ENCODE measurements at regions of chr3 and their contacts with region 1.

Region 1: DNA sequence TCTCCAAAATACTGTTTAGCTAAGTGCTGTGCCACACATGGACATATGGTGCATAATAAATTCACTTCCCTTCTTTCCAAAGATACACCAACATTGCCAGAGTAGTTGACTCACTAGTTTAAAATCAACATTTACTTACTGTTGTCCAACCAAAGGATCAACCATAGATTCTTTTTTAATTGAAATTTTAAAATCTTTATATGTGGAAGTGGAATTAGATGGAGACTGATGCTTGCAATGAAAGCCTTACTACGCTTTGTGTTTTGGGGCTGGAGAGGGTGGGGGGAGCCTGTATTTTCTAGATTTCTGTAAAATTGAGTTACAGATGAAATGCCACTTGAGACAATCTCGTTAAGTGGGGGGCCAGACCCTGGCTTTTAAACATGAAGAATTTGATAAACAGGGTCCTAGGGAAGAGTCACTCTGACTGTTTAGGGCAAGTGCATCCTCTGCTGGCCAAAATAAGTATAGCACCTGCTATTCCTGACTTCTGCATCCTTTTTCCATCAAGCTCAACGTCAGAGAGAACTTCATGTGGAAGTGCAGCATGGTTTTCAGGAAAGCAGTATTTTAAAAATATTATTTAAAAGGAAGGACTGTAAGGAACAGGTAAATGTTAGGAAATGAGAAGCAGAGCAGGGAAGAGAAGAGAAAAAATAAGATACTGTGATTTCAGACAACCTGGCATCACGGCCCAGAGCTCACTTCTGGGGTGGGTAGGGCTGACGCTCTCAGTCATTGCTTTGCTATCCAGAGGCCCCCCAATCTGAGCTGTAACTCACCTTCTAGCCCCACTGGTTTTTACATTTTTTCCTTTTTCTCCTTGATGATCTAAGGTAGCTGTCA is 76.7 kb downstream of the BOC start:
- DNase-seq: peak; percentile 69
- CTCF ChIP-seq: peak; percentile 95

Region 2: GRCh38 chr3:112832735-112833134 is 455.3 kb before region 1 on chr3:
- in situ Hi-C with region 1: no loop called
- DNase-seq: no peak
- CTCF ChIP-seq: no peak

Region 3: DNA sequence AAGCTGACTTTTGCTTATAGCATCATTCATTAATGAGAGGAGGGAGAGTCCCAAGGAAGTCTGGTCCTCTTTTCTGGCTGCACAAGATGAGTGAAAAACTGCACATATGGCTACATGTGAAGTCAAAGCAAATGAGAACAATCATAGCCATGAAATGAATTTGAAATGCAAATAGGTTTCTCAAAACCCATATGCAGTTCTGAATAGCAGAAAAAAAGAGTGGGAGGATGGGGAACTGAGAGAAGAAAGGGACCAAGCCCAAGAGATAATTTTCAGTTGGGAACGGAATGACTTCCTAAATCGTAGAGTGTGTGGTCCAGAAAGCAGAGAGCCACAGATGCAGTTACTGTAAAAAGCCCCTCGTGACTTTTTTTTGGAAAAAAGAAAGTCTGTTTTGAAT is 230.9 kb before region 1 on chr3:
- in situ Hi-C with region 1: loop called (anchors 5 kb)
- DNase-seq: peak; percentile 35
- CTCF ChIP-seq: no peak

Region 4: GRCh38 chr3:113136071-113136470 is 152.0 kb before region 1 on chr3:
- in situ Hi-C with region 1: loop called (anchors 10 kb)
- DNase-seq: no peak
- CTCF ChIP-seq: peak; percentile 48

Measured in GM13977 (cell line).